Right cardiac atrium (tissue), 5 donors: ENCODE measurements at regions of chr5 and their contacts with region 1.

Region 1: DNA sequence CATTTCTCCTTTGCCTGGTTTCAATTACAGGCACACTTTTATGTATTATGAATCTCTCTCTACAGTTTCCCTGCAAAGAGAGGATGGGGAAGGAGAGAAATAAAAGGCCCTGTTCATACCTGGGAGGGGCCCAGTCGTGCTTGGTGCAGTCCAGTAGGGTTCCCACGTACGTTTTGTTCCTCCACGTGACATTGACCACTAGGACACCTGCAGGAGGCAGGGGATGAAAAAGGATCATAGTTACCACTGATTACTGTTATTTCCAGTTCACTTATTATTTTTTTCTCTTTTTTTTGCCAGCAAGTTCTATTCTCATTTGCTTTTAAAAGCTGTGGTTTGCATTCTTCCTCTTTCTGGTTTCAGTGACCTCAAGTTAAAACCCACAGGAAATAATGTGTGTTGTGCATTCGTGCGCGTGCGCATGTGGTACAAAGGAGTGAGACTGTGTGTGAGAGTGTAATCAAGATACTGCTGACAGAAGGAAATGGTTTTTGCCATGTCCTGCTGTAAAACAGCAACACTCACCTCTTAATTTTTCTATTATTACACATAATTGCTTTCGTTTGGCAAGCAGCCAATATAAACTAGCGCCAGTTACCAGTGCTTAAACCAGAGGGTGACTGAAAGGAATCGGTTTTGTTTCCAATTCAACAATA is 96.8 kb downstream of the ZNF608 start:
- DNase-seq: peak; percentile 65 to 88 (median 88)
- ATAC-seq: peak; percentile 27 to 42
- H3K4me3 ChIP-seq: peak overlapping the region; percentile 20
- H3K27ac ChIP-seq: peak overlapping the region; percentile 78
- H3K4me1 ChIP-seq: peaks cover 23% of the 10 kb centered on the region
- H3K27me3 ChIP-seq: no peaks in the 10 kb centered on the region

Region 2: DNA sequence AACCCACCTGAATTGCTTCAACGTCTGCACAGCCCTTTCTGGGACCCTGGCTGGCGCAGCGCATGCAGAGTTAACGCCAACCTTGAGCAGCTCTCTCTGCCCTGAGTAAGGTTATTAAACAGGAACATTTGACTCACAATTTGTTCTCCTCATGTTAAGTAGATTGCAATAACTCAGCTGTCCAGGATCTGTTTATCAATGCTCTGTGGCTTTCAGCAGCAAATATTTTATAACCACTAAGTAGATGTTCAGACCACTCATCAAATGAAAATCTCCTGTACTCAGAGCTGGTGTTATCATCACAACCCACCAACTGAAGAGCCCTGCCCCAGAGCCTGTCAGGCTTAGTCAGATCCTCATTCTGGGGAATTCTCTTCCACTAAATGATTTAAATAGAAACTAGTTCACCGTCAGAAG is 306.2 kb before region 1 on chr5:
- intact Hi-C with region 1: loop called in 1 of 4 experiments (anchors 10 kb)
- DNase-seq: no peak
- ATAC-seq: peak; percentile 54 to 80
- H3K4me3 ChIP-seq: no peak overlapping the region
- H3K27ac ChIP-seq: peak overlapping the region; percentile 89
- H3K4me1 ChIP-seq: peaks cover 2% of the 10 kb centered on the region
- H3K27me3 ChIP-seq: no peaks in the 10 kb centered on the region

Region 3: DNA sequence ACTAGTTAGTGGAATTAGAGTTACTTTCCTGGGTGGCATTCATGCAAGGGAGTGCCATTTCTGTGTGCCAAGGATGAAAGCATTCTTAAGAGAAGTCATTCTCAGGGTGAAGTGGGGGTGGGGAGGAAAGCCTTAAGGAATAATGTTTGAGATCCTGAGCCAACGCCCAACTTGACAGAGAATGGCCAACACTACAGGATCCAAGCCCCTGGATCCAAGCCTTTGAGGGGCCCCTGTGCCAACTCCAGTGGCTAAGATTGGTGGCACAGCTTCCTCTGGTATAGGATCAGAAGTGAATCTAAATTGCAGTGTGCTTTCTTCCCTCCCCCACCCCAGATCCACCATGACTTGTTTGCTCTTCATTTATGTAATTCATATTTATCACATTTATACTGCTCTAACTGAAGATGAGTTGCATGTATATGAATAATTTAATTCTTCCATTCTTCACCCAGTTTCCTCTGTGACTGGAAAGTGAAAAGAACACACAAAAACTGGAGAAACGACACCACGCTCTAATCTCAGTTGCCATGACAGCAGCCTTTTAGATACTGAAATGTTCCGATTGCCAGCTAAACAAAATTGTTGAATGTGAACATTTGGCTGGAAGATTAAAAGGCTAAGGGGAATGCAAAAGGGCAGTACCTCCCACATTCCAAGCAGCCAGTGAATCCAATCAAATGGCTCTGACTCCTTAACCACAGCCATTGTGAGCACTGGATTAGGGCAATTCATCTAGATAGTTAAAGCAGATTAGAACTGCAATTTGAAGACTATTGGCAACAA is 92.3 kb after region 1 on chr5:
- intact Hi-C with region 1: loop called in 3 of 4 experiments (anchors 5 to 10 kb)
- DNase-seq: peak in 1 of 3 donors; percentile 50
- ATAC-seq: peak; percentile 62 to 65
- H3K4me3 ChIP-seq: peak overlapping the region; percentile 85
- H3K27ac ChIP-seq: peak overlapping the region; percentile 46
- H3K4me1 ChIP-seq: peaks cover 3% of the 10 kb centered on the region
- H3K27me3 ChIP-seq: no peaks in the 10 kb centered on the region

Region 4: DNA sequence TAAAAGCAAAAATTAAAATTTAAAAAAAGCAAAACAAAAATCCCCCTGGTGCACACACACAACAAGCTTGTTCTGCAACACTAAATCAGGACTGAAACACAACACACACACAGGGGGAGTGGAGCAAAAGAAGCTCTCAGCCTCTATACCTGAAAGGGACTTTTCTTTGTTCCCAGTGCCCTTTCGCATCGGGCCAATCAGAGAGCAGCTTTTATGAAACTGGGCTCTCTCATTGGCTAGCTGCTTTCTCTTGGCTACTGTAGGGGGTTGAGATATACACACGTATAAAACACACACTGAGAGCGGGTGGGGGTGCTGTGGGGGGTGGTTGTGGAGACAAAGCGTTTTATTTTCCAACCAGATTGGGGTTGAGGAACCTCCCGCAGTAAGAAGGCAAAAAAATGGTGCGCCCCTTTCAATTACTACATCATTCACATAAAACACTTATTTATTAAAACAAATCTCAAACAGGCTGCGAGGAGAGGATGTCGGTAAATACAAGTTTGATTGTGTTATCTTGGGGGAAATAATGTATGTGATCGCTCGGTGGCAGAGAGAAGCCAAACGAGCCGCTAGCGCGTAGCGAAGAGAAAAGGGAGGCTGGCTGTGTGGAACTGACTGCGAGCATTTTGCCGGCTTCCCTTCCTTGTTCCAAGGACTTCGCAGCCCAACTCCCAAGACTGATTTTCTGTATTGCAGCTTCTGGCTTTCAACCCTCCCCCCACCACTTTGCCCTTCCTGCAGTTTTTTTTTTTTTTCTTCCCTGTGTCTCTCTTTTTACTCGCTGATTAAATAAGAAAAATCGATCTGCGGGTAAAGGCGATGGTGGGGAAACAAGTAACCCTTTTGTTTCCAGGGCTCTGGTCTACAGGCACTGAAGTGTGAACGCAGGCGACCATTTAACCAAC is 99.3 kb after region 1 on chr5:
- intact Hi-C with region 1: loop called in 3 of 4 experiments (anchors 5 to 10 kb)
- DNase-seq: peak; percentile 57 to 77 (median 70)
- ATAC-seq: peak; percentile 85 to 90
- H3K4me3 ChIP-seq: peak overlapping the region; percentile 85
- H3K27ac ChIP-seq: peak overlapping the region; percentile 96
- H3K4me1 ChIP-seq: no peaks in the 10 kb centered on the region
- H3K27me3 ChIP-seq: no peaks in the 10 kb centered on the region

Region 5: GRCh38 chr5:124806373-124807077 is 156.9 kb after region 1 on chr5:
- intact Hi-C with region 1: no loop called
- DNase-seq: peak; percentile 80 to 90 (median 84)
- ATAC-seq: peak; percentile 80 to 89
- H3K4me3 ChIP-seq: no peak overlapping the region
- H3K27ac ChIP-seq: no peak overlapping the region
- H3K4me1 ChIP-seq: peaks cover 1% of the 10 kb centered on the region
- H3K27me3 ChIP-seq: no peaks in the 10 kb centered on the region

Region 6: DNA sequence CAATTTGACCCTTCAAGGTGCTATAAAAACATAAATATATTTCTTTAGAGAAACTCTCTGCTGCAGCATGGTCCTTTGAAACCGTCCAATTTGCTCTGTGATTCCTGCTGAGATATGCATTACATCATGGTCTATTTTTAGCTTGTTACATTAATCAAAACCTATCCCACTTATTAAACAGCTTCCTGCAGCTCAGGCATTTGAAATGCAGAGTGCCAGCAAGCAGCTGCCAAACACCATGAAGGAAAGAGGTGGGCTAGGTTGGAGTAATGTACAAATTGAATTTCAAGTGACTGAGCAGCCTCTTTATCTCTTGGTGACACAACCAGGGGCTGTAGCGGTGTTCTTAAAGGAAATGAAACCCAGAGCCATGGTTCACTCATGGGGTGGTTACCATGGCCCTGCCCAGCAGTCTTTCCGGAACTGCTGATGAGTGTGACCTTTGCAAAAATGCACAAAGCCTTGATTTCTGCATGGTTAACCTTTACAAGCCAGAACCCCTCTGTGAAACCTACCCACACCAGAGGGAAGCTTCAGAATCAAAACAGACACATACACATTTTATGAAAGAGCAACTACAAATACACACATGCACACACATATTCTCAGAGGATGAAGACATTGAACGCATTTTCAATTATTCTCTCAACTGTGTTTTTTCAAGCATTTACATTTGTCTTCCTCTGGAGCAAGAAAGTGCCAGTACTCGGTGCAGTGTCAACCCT is 252.6 kb after region 1 on chr5:
- intact Hi-C with region 1: loop called in 1 of 4 experiments (anchors 10 kb)
- DNase-seq: peak in 2 of 3 donors; percentile 17 to 35
- ATAC-seq: peak; percentile 12 to 88
- H3K4me3 ChIP-seq: no peak overlapping the region
- H3K27ac ChIP-seq: no peak overlapping the region
- H3K4me1 ChIP-seq: peaks cover 4% of the 10 kb centered on the region
- H3K27me3 ChIP-seq: no peaks in the 10 kb centered on the region

Region 7: GRCh38 chr5:125026896-125027732 is 377.5 kb after region 1 on chr5:
- intact Hi-C with region 1: no loop called
- DNase-seq: no peak
- ATAC-seq: peak; percentile 64 to 86
- H3K4me3 ChIP-seq: no peak overlapping the region
- H3K27ac ChIP-seq: no peak overlapping the region
- H3K4me1 ChIP-seq: no peaks in the 10 kb centered on the region
- H3K27me3 ChIP-seq: no peaks in the 10 kb centered on the region